ENCODE measurements at regions of chr6 and their contacts with region 1.

Region 1: DNA sequence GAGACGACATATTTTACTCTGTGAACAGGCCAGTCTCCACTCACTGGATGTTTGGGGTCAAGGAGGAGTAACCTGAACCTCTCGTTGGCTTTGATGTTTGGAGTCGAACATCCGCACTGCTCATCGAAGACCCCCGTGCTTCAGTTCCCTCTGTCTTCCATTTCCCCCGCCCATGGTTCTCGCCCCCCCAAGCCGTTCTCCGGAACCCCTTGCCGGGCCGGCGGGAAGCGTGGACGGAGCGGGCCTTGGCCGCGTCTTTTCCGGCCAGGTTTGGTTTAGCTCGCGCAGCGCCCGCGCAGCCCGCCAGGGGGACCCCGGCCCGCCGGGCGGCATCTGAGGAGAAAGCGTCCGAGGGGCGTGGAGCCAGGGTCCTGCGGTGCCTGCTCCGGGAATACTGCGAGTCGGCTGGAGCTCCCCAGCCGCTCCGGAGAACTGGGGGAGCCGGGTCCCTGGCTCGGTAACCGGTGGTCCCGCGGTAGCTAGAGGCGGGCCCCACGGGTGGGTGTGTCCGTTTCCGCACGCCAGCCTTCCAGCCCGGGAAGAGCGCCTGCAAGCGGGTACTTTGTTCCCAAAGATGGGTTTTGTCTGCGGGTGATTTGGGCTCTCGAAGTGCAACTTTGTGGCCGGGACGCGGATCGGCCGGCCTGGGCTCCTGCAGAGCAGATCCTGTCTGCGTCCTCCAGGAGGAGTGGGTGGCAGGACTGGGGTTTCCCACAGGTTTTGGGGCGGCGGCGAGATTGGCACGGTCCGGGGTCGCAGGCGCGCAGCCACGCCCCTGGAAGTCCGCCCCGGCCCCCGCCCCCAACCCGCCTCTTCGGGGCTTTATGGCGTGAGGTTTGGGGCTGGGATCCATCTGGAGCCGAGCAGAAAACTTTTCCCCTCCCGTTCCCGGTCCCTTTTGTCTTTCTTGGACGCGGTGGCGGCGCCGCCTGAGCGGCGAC is at the start of gene TMEM200A:
- DNase-seq: peak; percentile 70
- ATAC-seq: peak; percentile 76
- H3K4me3 ChIP-seq: peak within 1 kb of the TSS; percentile 85
- H3K27ac ChIP-seq: peak within 1 kb of the TSS; percentile 82
- H3K4me1 ChIP-seq: peaks cover 5% of the 10 kb centered on the region
- H3K27me3 ChIP-seq: no peaks in the 10 kb centered on the region
- CTCF ChIP-seq: peak; percentile 85
- POLR2A ChIP-seq: peak; percentile 15; the same call in 1 of the 2 replicates
- RAD21 ChIP-seq: peak; percentile 75
- total RNA-seq, gene TMEM200A: 37.1 and 47.8 TPM in 2 replicates

Region 2: GRCh38 chr6:130473886-130474285 is 108.5 kb after region 1 on chr6:
- CTCF ChIA-PET with region 1: no interaction called
- POLR2A ChIA-PET with region 1: no interaction called
- dilution Hi-C with region 1: no loop called
- in situ Hi-C with region 1: no loop called
- intact Hi-C with region 1: no loop called
- DNase-seq: peak; percentile 69
- ATAC-seq: no peak
- H3K4me3 ChIP-seq: no peak overlapping the region
- H3K27ac ChIP-seq: no peak overlapping the region
- H3K4me1 ChIP-seq: peaks cover 2% of the 10 kb centered on the region; the same call in 1 of the 2 replicates
- H3K27me3 ChIP-seq: no peaks in the 10 kb centered on the region
- CTCF ChIP-seq: no peak
- POLR2A ChIP-seq: no peak
- RAD21 ChIP-seq: no peak

Region 3: GRCh38 chr6:130602151-130602770 is 236.8 kb after region 1 on chr6:
- CTCF ChIA-PET with region 1: no interaction called
- POLR2A ChIA-PET with region 1: no interaction called
- dilution Hi-C with region 1: no loop called
- in situ Hi-C with region 1: no loop called
- intact Hi-C with region 1: loop called (anchors 2 kb)
- DNase-seq: peak; percentile 98
- ATAC-seq: peak; percentile 84
- H3K4me3 ChIP-seq: no peak overlapping the region
- H3K27ac ChIP-seq: peak overlapping the region; percentile 90
- H3K4me1 ChIP-seq: peaks cover 12% of the 10 kb centered on the region
- H3K27me3 ChIP-seq: no peaks in the 10 kb centered on the region
- CTCF ChIP-seq: no peak
- POLR2A ChIP-seq: no peak
- RAD21 ChIP-seq: no peak; the same call in 1 of the 2 replicates

Region 4: GRCh38 chr6:130697995-130698535 is 332.6 kb after region 1 on chr6:
- CTCF ChIA-PET with region 1: interaction called, 7 read pairs
- POLR2A ChIA-PET with region 1: no interaction called
- dilution Hi-C with region 1: no loop called
- in situ Hi-C with region 1: loop called (anchors 10 kb)
- intact Hi-C with region 1: loop called (anchors 1 kb)
- DNase-seq: peak; percentile 66
- ATAC-seq: peak; percentile 96
- H3K4me3 ChIP-seq: no peak overlapping the region
- H3K27ac ChIP-seq: no peak overlapping the region
- H3K4me1 ChIP-seq: no peaks in the 10 kb centered on the region; the same call in 1 of the 2 replicates
- H3K27me3 ChIP-seq: peaks cover 4% of the 10 kb centered on the region
- CTCF ChIP-seq: peak; percentile 89
- POLR2A ChIP-seq: 0 out of 2 replicates have a peak, but pooled peaks have one; percentile 45
- RAD21 ChIP-seq: peak; percentile 93

Region 5: GRCh38 chr6:130760006-130760405 is 394.6 kb after region 1 on chr6:
- CTCF ChIA-PET with region 1: no interaction called
- POLR2A ChIA-PET with region 1: no interaction called
- dilution Hi-C with region 1: no loop called
- in situ Hi-C with region 1: no loop called
- intact Hi-C with region 1: loop called (anchors 1 kb)
- DNase-seq: peak; percentile 61
- ATAC-seq: peak; percentile 83
- H3K4me3 ChIP-seq: no peak overlapping the region
- H3K27ac ChIP-seq: no peak overlapping the region
- H3K4me1 ChIP-seq: no peaks in the 10 kb centered on the region
- H3K27me3 ChIP-seq: peaks cover 8% of the 10 kb centered on the region
- CTCF ChIP-seq: peak; percentile 85
- POLR2A ChIP-seq: no peak
- RAD21 ChIP-seq: peak; percentile 88

Region 6: GRCh38 chr6:130843575-130844320 is 478.3 kb after region 1 on chr6:
- CTCF ChIA-PET with region 1: no interaction called
- POLR2A ChIA-PET with region 1: no interaction called
- dilution Hi-C with region 1: no loop called
- in situ Hi-C with region 1: no loop called
- intact Hi-C with region 1: loop called (anchors 1 kb)
- DNase-seq: peak; percentile 33
- ATAC-seq: peak; percentile 56; the same call in 1 of the 2 replicates
- H3K4me3 ChIP-seq: no peak overlapping the region
- H3K27ac ChIP-seq: no peak overlapping the region
- H3K4me1 ChIP-seq: peaks cover 6% of the 10 kb centered on the region
- H3K27me3 ChIP-seq: no peaks in the 10 kb centered on the region
- CTCF ChIP-seq: peak; percentile 52
- POLR2A ChIP-seq: no peak
- RAD21 ChIP-seq: peak; percentile 64